Posterior vena cava (tissue), 2 donors: ENCODE measurements at regions of chr13 and their contacts with region 1.

Region 1: GRCh38 chr13:110561344-110562035 is at the start of gene RAB20:
- DNase-seq: peak; percentile 96
- total RNA-seq, gene RAB20: 8.5 to 11.9 TPM

Region 2: GRCh38 chr13:110499621-110500281 is 61.7 kb before region 1 on chr13:
- intact Hi-C with region 1: no loop called
- DNase-seq: no peak

Region 3: DNA sequence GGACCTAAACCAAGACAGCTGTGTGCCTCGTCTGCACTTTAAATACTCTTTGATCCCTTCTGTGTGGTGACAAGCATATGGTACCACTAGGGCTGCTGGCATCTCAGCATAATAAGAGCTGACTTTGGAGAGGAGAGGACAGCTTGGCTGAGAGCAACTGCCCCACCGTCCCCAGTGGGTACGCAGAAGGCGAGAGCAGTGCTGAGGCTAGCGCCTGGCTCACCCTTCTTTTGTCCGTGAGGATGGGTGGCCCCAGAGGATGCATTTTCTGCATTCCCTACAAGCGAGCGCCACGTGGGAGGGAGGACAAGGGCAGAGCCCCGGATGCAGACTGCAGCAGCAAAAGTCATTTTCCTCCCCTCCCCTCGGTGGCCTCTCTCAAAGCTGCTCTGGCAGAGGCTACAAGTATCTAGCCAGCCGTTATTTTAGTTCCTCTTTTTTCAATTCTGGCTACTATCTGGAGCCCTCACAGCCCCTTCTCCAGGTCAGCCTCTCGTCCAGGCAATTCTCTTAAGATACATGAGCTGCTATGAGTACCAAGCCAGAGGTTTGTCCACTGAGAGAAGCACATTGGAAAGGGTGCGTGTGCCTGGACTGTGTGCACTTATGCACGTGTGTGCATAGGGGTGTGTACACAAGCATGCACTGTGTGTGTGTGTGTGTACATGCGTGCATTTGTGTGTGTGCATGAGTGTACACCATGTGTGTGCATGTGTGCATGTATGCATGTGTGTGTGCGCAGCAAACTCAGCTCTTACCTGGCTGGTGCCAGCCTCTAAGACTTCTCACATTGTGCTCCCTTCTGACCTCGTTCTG is 51.3 kb before region 1 on chr13:
- intact Hi-C with region 1: loop called in 1 of 2 experiments (anchors 5 kb)
- DNase-seq: no peak

Region 4: DNA sequence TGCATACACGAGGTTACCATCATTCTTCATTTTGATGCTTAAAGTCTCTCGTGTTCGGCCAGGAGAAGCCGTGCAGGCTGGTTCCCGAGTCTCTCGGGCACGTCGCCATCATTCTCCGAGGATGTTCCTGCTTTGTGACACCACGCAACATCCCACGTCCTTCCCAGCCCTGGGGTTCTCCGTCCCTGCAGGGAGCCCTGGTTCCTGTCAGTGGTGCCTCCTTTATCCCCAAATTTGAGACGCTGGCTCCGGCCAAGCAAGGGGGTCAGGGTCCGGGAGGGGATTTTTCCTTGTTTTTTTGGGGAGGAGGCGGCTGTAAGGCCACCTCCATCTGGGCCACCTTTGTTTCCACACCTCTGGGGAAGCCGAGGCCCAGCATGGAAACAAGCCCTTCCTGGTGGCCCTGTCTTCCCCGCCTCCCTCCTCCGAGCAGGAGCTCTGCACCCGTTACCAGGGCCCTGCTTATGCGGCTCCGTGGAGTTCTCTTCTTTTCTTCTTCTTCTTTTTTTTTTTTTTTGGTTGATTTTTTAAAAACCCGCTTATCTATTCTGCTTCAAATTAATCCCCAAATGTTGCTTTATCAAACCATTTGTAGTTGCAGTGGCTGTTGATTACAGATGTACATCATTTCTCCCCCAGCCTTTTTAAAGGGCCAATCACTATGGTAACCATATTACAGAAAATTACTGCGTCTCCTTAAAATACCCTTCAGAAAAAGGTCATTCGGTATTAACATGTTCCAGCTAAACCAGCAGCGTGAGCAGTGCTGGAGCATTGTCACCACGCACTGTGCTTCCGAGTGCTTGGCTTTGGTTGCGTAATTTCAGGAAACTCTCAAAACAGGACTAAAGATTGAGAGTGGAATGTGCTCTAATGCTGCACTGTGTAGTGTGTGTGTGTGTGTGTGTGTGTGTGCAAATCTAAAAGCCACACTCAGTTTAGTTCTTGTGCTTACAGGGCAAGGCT is 809.4 kb after region 1 on chr13:
- intact Hi-C with region 1: no loop called
- DNase-seq: no peak